ENCODE measurements at regions of chr6 and their contacts with region 1.

Region 1: DNA sequence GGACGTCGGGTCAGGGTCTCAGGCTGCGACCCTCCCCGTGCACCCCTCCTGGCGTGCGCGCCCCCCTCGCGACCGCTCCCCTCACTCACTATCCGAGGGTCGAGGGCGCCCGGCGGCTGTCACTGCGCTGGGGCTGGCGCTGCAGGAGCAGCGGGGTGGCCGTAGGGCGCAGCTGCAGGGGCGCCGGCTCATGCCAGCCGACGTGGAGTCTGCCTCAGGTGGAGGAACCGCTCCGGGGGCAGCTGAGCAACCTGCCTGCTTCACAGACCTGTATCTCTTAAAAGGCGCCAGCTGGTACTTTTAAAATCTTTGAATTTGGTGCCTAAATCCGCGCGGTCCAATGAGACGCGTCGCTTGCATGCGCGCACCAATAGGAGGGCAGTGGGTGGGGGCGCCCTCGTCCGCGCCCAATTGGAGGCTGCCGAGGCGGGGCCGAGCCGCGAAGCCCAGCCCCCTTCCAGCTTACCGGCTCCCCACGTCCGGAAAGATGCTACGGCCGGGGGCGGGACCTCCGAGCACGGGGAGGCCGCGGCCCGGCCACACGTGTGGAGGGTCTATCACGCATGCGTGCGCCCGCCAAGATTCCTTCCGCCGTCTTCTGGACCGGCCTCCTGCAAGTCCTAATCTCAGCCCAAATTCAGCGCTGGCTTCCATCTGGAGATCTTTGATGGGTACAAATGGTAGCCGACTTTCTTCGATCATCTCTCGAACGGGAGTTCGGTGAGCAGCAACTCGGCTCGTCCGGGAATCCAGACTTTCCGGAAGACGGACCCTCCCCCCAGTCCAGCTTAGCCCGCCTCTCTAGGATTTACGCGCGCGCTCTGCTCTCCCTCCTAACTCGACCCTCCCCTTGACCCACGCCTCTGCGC is at the start of gene FBXO5:
- DNase-seq: peak; percentile 98
- ATAC-seq: peak; percentile 92
- H3K4me3 Mint-ChIP-seq: peak within 1 kb of the TSS; percentile 90
- H3K27ac Mint-ChIP-seq: peak within 1 kb of the TSS; percentile 97
- H3K4me1 Mint-ChIP-seq: peaks cover 47% of the 10 kb centered on the region
- H3K27me3 Mint-ChIP-seq: no peaks in the 10 kb centered on the region
- total RNA-seq, gene FBXO5: 72.3 to 73.9 TPM

Region 2: GRCh38 chr6:152993431-152993830 is 10.4 kb after region 1 on chr6:
- CTCF ChIA-PET with region 1: interaction called, 6 read pairs
- POLR2A ChIA-PET with region 1: interaction called, 11 read pairs
- DNase-seq: no peak
- ATAC-seq: peak; percentile 44
- H3K4me3 Mint-ChIP-seq: no peak overlapping the region
- H3K27ac Mint-ChIP-seq: no peak overlapping the region
- H3K4me1 Mint-ChIP-seq: peaks cover 30% of the 10 kb centered on the region
- H3K27me3 Mint-ChIP-seq: no peaks in the 10 kb centered on the region

Region 3: GRCh38 chr6:153002607-153003365 is 19.8 kb after region 1 on chr6 and contains the start of gene MTRF1L:
- CTCF ChIA-PET with region 1: interaction called, 6 read pairs
- POLR2A ChIA-PET with region 1: interaction called, 48 read pairs
- DNase-seq: peak; percentile 94
- ATAC-seq: peak; percentile 94
- H3K4me3 Mint-ChIP-seq: peak within 1 kb of the TSS; percentile 94
- H3K27ac Mint-ChIP-seq: peak within 1 kb of the TSS; percentile 94
- H3K4me1 Mint-ChIP-seq: peaks cover 32% of the 10 kb centered on the region
- H3K27me3 Mint-ChIP-seq: peaks cover 2% of the 10 kb centered on the region
- total RNA-seq, gene MTRF1L: 15.6 to 20.6 TPM